ENCODE measurements at regions of chr6 and their contacts with region 1.

Region 1: DNA sequence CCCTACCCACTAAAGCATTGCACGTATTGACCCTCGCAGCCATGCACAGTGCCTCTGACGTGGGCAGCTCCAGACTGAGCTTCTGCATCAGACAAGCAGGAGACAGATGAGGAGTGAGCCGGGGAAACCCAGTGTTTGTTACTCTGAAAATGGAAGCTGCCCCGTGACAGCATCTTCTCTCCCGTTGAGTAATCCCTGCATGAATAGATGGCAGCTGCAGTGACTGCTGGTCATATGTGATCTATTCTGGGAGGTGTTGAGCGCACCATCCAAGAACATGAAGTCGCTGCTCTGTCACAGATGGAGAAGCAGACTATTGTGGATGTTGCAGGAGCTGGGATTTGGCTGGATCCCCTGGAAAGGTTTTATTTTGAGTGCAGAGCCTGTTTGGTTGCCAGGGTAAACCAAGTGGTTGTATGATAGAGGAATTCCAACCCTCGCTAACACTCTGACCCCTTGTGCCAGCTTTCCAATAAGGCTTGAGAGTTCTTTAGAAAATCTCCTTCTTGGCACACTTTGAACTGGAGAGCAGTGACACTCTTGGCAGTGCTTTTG is 242.2 kb downstream of the NRN1 start:
- DNase-seq: peak; percentile 54
- ATAC-seq: peak; percentile 91

Region 2: DNA sequence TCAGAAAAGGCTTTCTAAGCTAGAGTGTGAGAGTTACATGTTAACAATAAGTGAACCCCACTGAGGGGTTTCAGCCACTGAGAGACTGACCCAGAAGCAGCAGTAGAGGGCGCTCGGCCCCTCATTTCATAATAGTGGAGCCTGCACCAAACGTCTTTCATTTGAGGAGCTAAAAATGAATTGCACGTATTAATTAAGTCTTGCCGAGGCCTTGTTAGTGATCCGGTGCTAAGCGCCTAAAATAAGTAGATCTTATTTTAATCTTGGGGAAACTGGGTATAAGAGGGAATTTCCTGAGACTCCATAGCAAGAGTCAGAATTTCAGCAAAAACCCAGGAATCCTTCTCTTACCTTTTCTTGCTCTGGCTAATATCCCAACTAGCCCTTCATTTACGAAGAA is 293.4 kb before region 1 on chr6:
- intact Hi-C with region 1: loop called (anchors 10 kb)
- DNase-seq: peak; percentile 76
- ATAC-seq: peak; percentile 84

Region 3: GRCh38 chr6:5712349-5713215 is 51.9 kb before region 1 on chr6:
- intact Hi-C with region 1: no loop called
- DNase-seq: no peak
- ATAC-seq: no peak